ENCODE measurements at regions of chr2 and their contacts with region 1.

Region 1: GRCh38 chr2:147099837-147100720 is 744.8 kb upstream of the ACVR2A start:
- DNase-seq: no peak
- H3K4me3 ChIP-seq: no peak overlapping the region
- H3K27ac ChIP-seq: no peak overlapping the region
- H3K4me1 ChIP-seq: 0 out of 7 replicates have a peak, but pooled peaks cover 0 to under 1% (median 0%) of the 10 kb centered on the region in 4 experiments
- H3K27me3 ChIP-seq: peaks cover 0 to 4% (median under 1%) of the 10 kb centered on the region in 4 experiments; a peak in 2 of 7 replicates
- CTCF ChIP-seq: no peak
- EP300 ChIP-seq: no peak
- POLR2A ChIP-seq: no peak
- RAD21 ChIP-seq: no peak

Region 2: GRCh38 chr2:147017951-147018642 is 82.0 kb before region 1 on chr2:
- CTCF ChIA-PET with region 1: no interaction called
- POLR2A ChIA-PET with region 1: no interaction called
- DNase-seq: no peak
- H3K4me3 ChIP-seq: no peak overlapping the region
- H3K27ac ChIP-seq: no peak overlapping the region
- H3K4me1 ChIP-seq: peaks cover 0 to 2% (median 0%) of the 10 kb centered on the region in 4 experiments; a peak in 1 of 7 replicates
- H3K27me3 ChIP-seq: no peaks in the 10 kb centered on the region
- CTCF ChIP-seq: no peak
- EP300 ChIP-seq: no peak
- POLR2A ChIP-seq: no peak
- RAD21 ChIP-seq: no peak

Region 3: DNA sequence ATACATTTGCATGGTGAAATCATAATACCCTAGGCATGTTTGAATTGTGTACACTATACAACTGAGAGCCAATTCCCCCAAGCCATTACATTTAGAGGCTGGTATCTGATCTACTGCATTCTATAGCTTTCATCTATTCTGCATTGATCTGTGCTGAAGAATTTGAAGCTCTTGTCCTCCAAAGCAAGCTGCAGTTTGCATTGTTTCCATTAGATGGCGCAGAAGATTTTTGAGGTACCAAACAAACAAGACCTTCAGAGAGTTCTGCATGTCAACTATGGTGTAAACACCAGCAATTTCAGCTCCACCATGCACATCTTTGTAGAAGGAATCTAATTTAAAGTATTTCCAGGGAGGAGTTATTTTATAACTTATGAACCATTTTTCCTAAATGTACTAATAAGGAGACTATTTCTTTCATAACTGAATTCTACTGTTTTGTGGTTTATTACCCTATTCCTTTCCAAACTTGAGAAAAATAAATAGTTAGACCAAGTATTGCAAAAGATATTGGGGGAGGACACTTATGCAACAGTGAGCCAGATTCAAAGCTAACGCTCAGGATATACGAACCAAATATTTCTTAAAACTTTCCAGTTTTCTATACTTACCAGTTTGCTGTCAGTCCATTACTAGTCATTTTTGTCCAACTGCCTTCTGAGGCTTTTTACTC is 17.1 kb before region 1 on chr2:
- CTCF ChIA-PET with region 1: interaction called, 25 read pairs
- POLR2A ChIA-PET with region 1: no interaction called
- DNase-seq: peak; percentile 53 to 82
- H3K4me3 ChIP-seq: no peak overlapping the region
- H3K27ac ChIP-seq: no peak overlapping the region
- H3K4me1 ChIP-seq: no peaks in the 10 kb centered on the region
- H3K27me3 ChIP-seq: no peaks in the 10 kb centered on the region
- CTCF ChIP-seq: peak in 2 of 3 experiments; percentile 77 to 93; a peak in 3 of 4 replicates
- EP300 ChIP-seq: no peak
- POLR2A ChIP-seq: no peak
- RAD21 ChIP-seq: peak; percentile 80 to 87

Region 4: GRCh38 chr2:147273106-147273505 is 173.0 kb after region 1 on chr2:
- CTCF ChIA-PET with region 1: no interaction called
- POLR2A ChIA-PET with region 1: no interaction called
- DNase-seq: no peak
- H3K4me3 ChIP-seq: no peak overlapping the region
- H3K27ac ChIP-seq: no peak overlapping the region
- H3K4me1 ChIP-seq: no peaks in the 10 kb centered on the region
- H3K27me3 ChIP-seq: no peaks in the 10 kb centered on the region
- CTCF ChIP-seq: no peak
- EP300 ChIP-seq: no peak
- POLR2A ChIP-seq: no peak
- RAD21 ChIP-seq: no peak